ENCODE measurements at regions of chr12 and their contacts with region 1.

Region 1: DNA sequence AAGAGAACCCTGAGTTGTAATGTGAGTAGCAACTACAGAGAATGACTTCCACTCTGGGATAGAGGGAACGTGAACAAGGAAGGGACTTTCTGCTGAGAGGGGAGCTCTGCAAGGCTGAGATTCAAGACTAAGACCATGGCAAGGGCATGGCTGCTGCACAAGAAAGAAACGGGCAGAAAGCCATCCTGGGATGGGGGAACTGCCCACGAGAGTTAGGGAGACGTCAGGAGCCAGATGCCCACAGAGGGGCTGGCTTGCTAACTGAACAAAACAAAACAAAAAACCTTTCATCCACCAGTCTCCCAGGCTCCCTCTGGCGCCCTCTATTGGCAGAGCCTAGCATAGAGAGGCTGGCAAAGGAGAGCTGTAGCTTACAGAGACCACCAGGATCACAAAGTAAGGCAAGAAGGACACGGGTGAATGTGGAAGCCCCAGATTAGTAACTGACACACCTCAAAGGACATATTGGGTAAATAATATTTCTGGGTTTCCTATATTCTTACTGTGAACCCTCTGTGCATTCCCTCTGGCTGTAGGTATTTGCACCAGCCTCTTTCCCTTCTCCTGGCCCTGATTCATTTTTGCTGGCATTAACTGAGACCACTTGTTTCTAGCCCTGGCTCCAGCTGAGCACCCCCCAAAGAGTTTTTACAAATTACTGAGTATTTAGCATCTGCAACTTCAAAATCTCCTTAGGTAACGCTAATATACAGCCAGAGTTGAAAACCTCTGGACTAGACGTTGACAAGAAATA is 338.3 kb downstream of the EMP1 start:
- DNase-seq: peak; percentile 34 to 50 (median 40)
- ATAC-seq: peak; percentile 71
- H3K4me3 ChIP-seq: no peak overlapping the region
- H3K27ac ChIP-seq: no peak overlapping the region
- H3K4me1 ChIP-seq: no peaks in the 10 kb centered on the region
- H3K27me3 ChIP-seq: no peaks in the 10 kb centered on the region
- CTCF ChIP-seq: peak; percentile 71 to 73 (median 71)
- EP300 ChIP-seq: no peak
- POLR2A ChIP-seq: no peak
- RAD21 ChIP-seq: peak in 1 of 2 experiments; percentile 39; a peak in 1 of 4 replicates

Region 2: DNA sequence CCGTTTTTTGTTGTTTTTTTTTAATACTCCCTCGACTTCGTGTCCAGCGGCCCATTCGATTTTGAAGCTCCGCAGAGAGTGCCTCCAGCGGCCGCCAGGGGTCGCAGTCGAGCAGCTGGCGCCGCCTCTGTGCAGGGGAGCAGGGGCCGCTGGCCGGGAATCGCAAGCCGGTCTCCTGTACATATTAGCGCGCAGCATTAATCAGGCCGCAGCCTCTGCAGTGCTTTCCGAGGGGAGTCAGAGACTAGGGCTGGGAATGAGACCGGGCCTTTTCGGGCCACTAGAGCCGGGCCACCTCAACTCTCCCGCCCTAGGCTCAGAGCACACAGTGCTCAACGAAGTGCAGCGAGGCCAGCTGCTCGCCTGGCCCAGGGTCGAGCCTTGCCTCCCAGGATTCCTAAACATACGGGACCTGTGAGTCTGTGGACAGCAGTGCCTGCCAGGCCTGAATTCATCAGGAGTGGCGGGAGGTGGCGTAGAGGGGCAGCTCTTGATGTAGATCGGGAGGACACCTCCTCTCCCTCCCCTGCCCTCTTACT is 256.5 kb before region 1 on chr12:
- CTCF ChIA-PET with region 1: no interaction called
- POLR2A ChIA-PET with region 1: no interaction called
- in situ Hi-C with region 1: no loop called
- intact Hi-C with region 1: loop called (anchors 10 kb)
- DNase-seq: peak; percentile 63 to 79 (median 76)
- ATAC-seq: peak; percentile 100
- H3K4me3 ChIP-seq: no peak overlapping the region
- H3K27ac ChIP-seq: no peak overlapping the region
- H3K4me1 ChIP-seq: peaks cover 0 to 8% of the 10 kb centered on the region in 2 experiments; a peak in 2 of 5 replicates
- H3K27me3 ChIP-seq: peaks cover 0 to 25% of the 10 kb centered on the region in 2 experiments; a peak in 2 of 5 replicates
- CTCF ChIP-seq: peak; percentile 73 to 79 (median 78)
- EP300 ChIP-seq: no peak
- POLR2A ChIP-seq: no peak
- RAD21 ChIP-seq: peak; percentile 49 to 64

Region 3: DNA sequence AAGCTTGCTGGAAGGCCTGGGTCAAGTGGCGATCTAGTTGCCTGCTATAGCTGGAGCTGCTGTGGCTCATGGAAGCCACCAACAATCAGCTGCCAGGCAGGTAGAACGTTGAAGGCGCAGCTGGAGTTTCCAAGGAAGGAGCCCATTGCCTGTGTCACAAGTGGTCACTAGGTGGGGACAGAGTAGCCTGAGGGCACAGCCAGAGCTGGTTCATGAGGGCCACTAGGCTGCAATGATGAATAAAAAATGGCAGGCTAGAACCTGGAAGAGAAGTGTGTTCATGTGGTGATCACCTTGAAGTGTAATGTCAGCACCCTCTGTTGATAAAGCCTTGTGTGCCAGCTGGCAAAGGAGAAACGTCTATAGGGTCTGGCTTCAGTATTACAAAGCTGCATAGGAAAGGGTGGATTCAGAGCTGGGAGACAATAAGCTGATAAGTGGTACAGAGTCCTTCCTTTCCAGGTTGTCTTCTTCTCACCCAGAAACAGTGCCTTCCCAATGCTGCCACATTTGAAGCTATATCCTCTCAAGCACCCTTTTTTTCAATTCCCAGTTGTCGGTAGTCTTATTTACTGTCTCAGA is 172.5 kb before region 1 on chr12:
- CTCF ChIA-PET with region 1: no interaction called
- POLR2A ChIA-PET with region 1: interaction called, 3 read pairs
- in situ Hi-C with region 1: no loop called
- intact Hi-C with region 1: loop called (anchors 5 kb)
- DNase-seq: peak; percentile 47 to 62 (median 57)
- ATAC-seq: peak; percentile 96
- H3K4me3 ChIP-seq: no peak overlapping the region
- H3K27ac ChIP-seq: no peak overlapping the region
- H3K4me1 ChIP-seq: no peaks in the 10 kb centered on the region
- H3K27me3 ChIP-seq: peaks cover 0 to 14% of the 10 kb centered on the region in 2 experiments; a peak in 3 of 5 replicates
- CTCF ChIP-seq: peak; percentile 71 to 82 (median 82)
- EP300 ChIP-seq: no peak
- POLR2A ChIP-seq: no peak
- RAD21 ChIP-seq: peak; percentile 47 to 75